Left ventricle myocardium superior (tissue), 1 donor: ENCODE measurements at regions of chr6 and their contacts with region 1.

Region 1: DNA sequence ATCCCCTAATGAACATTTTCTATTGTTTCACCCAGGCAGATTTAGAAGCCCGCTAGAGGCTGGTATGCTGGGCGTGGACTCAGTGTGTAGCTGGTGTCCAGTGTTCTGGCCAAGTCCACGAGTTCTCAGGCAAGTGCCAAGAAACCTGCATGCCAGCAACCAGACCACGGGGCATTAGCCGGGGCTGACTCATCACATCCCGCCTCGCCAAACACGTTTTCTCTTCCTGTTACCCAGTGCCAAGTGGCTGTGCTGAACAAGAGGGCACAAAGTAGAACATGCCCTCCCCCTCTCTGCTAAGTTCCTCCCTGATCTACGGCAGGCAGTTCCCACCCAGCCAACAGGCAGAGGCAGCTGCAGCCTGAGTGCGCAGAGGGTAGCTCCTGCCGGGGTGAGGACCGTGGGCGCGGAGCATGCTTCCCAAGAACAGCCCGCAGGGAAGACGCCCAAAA is 29.6 kb downstream of the RAMACL start:
- DNase-seq: peak; percentile 89
- ATAC-seq: peak; percentile 95

Region 2: DNA sequence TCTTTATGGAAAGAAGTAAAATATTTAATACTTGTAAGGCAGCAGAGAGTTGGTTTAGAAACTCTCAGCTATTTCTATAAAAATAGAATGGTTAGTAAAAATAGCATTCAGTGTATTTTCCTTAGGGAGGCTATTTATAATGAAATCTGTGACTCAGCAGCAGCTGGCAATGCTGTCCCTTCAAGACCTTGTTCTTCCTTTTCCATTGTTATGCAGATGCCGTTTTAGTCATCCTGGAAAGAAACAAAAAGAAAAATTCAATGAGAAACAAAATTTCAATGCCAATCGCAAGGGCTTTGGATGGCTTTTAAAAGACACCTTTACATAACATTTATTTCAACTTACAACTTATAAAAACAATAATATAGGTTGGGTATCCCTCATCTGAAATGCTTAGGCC is 191.7 kb before region 1 on chr6:
- intact Hi-C with region 1: no loop called
- DNase-seq: no peak
- ATAC-seq: peak; percentile 70

Region 3: GRCh38 chr6:166627033-166627874 is 70.4 kb after region 1 on chr6 and contains the start of gene RPS6KA2:
- intact Hi-C with region 1: loop called (anchors 10 kb)
- DNase-seq: peak; percentile 100
- ATAC-seq: peak; percentile 93
- total RNA-seq, gene RPS6KA2: 63.4 TPM

Region 4: DNA sequence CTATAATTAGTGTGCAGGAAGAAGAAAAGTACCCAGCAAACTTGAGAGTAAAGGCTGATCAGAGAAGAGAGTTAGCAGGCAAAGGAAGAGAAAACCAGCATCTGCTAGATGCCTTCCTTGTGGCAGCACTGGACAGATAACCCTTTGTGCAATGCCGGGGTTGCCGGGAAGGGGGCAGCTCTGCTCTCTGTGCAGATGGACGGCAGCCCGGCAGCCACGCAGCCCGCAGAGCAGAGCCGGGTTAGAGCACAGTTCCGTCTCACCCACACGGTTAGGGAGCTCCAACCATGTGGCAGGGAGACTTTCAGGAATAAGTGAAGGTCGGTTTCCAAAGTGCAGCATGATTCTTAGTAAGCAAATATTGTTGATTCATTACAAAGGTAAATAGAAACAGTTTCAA is 150.1 kb after region 1 on chr6:
- intact Hi-C with region 1: no loop called
- DNase-seq: peak; percentile 78
- ATAC-seq: peak; percentile 93